ENCODE measurements at regions of chr12 and their contacts with region 1.

Region 1: GRCh38 chr12:91382081-91382543 is 199.5 kb upstream of the DCN start:
- DNase-seq: peak; percentile 17
- H3K4me3 ChIP-seq: peak overlapping the region; percentile 61
- CTCF ChIP-seq: peak; percentile 82

Region 2: DNA sequence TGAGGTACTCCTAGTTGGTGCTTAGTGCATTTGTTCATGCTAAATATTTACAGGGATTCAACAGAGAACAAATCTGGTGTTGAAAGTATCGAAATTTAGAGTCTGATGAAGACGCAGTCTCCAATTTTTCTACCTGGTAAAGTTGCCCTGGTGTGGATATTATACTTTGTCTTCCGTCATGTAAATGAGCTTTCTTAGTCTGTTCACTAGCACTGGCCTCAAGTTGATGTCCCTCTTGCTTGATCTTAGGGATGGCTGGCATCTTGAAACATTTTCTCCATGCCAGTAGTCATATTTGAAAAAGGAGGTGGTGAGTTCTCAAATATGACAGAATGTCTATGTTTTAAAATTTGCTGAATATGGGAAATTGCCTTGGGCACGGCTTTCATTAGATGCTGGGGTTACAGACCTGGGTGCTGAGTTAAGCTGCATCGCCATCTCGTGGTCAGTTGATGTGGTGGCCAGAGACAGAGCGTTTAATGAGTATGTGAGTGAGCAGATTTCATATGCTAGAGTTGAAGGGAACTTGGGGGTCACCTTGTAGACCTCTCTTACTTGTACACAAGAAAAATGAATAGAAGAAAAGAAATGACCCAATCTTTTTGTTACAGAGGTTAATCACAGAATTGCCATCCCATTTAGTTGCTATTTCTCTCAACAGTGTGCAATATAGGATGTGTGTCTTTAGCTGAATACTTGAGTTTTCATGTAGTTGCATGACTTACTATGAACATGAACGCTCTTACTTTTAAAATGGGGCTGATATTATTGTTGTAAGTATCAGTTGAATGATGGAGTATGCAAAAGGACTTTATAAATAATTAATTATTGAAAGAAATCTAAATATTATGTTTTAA is 26.7 kb before region 1 on chr12:
- CTCF ChIA-PET with region 1: interaction called, 13 read pairs
- POLR2A ChIA-PET with region 1: no interaction called
- DNase-seq: no peak
- H3K4me3 ChIP-seq: no peak overlapping the region
- CTCF ChIP-seq: peak; percentile 86

Region 3: DNA sequence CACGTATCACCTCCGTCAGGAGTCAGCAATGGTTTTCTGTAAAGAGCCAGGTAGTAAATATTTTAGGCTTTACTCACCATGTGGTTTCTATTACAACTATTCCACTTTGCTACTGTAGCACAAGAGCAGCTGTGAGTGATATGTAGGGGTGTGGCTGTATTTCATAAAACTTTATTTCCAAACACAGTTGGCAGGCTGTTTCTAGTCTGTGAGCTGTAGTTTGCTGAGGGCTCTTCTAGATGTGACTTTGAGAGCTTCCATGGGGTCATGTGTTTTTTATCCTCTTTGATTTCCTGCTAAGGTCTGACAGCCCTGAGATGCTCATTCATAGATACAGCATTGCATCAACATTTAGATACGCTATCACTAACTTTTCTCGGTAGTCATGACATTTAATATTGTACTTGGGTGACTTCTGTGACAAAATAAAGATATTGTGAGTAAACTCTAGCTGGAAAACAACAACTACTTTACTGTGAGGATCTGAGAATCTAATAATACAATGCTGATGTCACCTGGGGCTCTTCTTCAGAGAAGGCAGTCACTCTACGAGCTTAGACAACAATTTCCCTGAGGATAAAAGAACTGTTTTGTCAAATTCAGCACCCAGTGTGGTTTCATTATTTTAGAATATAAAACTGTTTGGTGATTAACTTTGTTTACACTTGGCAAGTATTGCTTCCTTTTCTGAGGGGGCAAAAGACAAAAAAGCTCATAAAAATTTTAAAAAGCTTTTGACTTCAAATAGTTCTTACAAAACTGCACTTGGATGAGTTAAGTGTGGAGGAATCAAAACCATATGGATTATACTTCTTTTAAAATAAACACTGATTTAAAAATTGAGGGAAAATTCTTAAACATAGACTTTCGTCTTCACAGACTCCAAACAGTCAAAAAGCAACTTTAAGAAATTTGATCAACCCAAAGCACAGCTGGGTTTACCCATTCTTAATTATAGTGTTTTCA is 31.8 kb after region 1 on chr12:
- CTCF ChIA-PET with region 1: interaction called, 10 read pairs
- POLR2A ChIA-PET with region 1: no interaction called
- DNase-seq: no peak
- H3K4me3 ChIP-seq: no peak overlapping the region
- CTCF ChIP-seq: no peak

Region 4: DNA sequence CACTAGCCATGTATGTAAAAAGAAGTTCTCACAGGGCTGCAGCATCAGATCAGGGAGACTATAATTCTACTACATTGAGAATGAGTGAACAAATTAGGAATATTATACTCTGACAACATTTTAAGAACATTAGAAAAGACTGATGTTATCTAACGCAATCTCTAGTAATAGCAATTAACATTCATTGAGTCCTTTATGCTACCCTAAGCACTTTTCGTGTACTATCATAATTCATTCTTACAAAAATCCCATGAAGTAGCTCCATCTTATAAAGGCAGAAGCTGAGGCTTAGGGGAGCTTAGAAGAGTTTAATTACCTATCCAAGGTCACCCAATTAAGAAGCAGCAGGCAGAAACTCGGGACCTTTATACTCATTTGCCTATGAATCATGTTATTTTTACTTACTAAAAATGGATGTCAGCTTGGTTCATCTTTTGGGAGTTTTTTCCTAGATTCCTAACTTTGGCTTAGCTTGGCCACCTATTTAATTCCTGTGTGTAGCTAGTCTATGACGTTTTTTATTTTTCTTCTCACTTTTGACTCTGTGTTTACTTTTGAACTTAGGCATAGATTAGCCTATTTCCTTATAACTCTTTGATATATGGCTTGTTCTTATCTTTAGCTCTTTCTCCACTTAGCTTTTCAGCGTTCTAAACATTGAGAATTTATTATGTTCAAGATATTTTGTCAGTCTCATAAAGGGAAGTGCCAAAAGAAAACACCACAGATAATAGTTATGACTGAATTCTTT is 134.0 kb after region 1 on chr12:
- CTCF ChIA-PET with region 1: no interaction called
- POLR2A ChIA-PET with region 1: no interaction called
- DNase-seq: no peak
- H3K4me3 ChIP-seq: no peak overlapping the region
- CTCF ChIP-seq: no peak

Region 5: DNA sequence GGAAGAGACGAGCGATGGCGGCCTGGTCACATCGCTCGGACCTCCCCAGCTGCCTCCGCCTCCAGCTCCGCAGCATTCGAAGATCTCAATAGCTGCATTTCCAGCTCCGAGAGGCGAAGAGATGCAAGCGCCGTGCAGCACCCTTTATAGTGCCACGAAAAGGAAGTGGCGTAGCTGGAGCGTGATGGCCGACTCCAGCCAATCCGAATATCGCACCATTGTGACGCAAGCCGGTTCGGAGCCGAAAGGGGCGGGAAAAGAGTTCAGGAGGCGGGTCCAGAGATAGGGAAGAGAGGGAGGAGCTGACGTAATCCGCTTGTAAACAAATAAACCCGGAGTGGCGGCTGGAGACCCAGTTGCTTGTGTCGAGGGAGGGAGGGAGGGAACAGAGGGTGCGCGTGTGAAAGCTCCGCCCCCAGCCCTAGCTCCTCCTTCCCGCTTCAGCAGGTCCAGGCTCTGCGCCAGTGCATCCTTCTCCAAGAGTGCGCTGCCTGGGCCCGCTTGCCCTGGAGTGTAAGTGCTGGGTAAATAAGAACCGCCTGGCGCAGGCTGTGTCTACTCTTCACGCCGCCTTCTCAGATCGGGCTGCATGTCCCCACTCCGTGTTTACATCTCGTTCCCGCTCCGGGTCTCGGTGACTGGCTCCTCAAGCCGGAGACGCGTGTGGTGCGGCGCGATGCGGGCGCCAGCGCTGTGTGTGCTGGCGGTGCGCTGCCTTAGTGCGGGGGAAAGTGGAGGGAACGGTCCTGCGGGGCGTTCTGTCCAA is 763.8 kb after region 1 on chr12 and contains the start of gene BTG1:
- CTCF ChIA-PET with region 1: interaction called, 20 read pairs
- POLR2A ChIA-PET with region 1: interaction called, 43 read pairs
- DNase-seq: peak; percentile 99
- H3K4me3 ChIP-seq: peak within 1 kb of the TSS; percentile 95
- CTCF ChIP-seq: no peak

Region 6: DNA sequence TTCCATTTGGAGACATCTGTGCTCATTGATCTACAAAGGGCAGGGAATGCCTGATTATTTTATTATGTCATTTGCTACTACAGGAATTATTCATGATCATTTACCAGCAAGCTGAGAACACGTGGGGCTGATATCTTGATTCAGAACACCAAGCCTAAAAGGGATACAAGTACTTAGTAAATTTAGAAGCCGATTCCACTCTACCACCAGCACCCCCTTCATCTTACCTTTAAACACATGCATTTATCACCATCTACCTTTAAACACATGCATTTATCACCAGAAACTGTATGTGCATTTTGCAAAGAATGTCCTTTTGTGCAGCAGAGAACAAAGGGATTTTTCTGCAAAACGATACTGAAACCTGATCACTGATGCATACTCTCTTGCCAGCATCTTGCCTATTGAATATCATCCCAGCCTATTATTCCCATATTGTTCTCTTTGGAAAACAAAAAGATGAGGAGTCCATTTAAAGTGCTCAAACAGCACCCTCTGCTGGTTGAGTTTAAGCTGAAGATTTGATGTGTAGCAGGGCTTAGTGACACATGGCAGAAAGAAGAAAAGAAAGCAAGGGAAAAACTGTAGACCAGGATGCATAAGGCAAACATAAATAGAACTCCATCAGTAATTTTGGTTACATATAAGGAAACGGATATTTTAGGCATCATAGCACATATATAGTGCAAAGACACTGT is 1188.1 kb after region 1 on chr12:
- CTCF ChIA-PET with region 1: interaction called, 51 read pairs
- POLR2A ChIA-PET with region 1: no interaction called
- DNase-seq: peak; percentile 38
- H3K4me3 ChIP-seq: no peak overlapping the region
- CTCF ChIP-seq: peak; percentile 48

Region 7: GRCh38 chr12:92654929-92655328 is 1272.8 kb after region 1 on chr12:
- CTCF ChIA-PET with region 1: interaction called, 72 read pairs
- POLR2A ChIA-PET with region 1: no interaction called
- DNase-seq: no peak
- H3K4me3 ChIP-seq: no peak overlapping the region
- CTCF ChIP-seq: no peak